ENCODE measurements at regions of chr15 and their contacts with region 1.

Region 1: GRCh38 chr15:59797756-59798604 is 108.9 kb upstream of the BNIP2 start:
- DNase-seq: no peak
- H3K4me3 ChIP-seq: no peak overlapping the region
- H3K4me3 Mint-ChIP-seq: peak overlapping the region; percentile 69 to 93 (median 81)
- H3K27ac ChIP-seq: peak overlapping the region; percentile 38
- H3K27ac Mint-ChIP-seq: peak overlapping the region; percentile 43 to 98 (median 92)
- H3K4me1 ChIP-seq: peaks cover 88% of the 10 kb centered on the region
- H3K4me1 Mint-ChIP-seq: peaks cover 45 to 85% (median 64%) of the 10 kb centered on the region in 4 donors
- H3K27me3 ChIP-seq: no peaks in the 10 kb centered on the region
- H3K27me3 Mint-ChIP-seq: no peaks in the 10 kb centered on the region

Region 2: DNA sequence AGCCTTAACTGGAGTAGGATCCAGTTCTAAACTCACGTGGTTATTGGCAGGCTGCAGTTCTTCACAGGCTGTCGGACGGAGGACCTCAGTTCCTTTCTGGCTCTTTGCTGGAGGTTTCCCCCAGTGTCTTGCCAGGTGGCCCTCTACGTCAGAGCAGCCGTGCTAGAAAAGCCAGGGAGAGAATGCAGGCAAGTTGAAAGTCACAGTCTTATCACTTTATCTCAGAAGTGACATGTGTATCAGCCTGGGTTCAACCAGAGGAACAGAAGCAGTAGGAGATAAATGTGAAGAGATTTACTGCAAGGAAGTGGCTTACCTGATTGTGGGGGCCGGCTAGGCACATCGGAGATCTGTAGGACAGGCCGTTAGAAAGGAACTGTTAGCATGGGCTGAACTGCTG is 16.4 kb after region 1 on chr15:
- CTCF ChIA-PET with region 1: interaction called, 5 read pairs
- POLR2A ChIA-PET with region 1: interaction called, 20 read pairs
- intact Hi-C with region 1: loop called (anchors 1 kb)
- DNase-seq: peak; percentile 62 to 75 (median 68)
- H3K4me3 ChIP-seq: no peak overlapping the region
- H3K4me3 Mint-ChIP-seq: peak overlapping the region in 7 of 8 donors; percentile 1 to 69 (median 53)
- H3K27ac ChIP-seq: peak overlapping the region; percentile 8
- H3K27ac Mint-ChIP-seq: peak overlapping the region; percentile 45 to 91 (median 86)
- H3K4me1 ChIP-seq: peaks cover 25% of the 10 kb centered on the region
- H3K4me1 Mint-ChIP-seq: peaks cover 16 to 27% (median 25%) of the 10 kb centered on the region in 4 donors
- H3K27me3 ChIP-seq: no peaks in the 10 kb centered on the region
- H3K27me3 Mint-ChIP-seq: peaks cover 12 to 14% of the 10 kb centered on the region in 2 donors

Measured in CD4-positive, alpha-beta memory T cell (primary cell).